ENCODE measurements at regions of chr5 and their contacts with region 1.

Region 1: GRCh38 chr5:148746826-148747535 is 79.4 kb upstream of the ADRB2 start:
- DNase-seq: no peak

Region 2: DNA sequence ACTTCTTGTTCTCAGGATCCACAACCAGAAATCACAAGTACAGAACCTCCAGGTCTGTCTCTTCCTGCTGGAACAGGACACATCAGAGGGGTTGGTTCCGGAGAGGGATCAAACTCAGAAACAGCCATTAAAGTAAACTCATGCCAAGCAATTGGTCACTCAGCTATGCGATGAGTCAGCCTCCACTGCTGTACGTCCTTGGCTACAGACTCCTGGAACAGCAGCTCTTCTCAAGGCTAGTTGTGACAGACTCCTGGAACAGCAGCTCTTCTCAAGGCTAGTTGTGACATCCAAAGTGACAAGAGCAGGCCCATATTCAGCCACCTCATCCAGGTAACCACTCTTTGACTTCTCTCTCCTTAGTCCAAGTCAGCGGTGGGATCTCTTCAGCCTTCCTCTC is 478.4 kb before region 1 on chr5 and contains the start of gene SPINK13:
- intact Hi-C with region 1: no loop called
- DNase-seq: no peak
- total RNA-seq, gene SPINK13: not detected

Region 3: GRCh38 chr5:148523139-148523538 is 223.8 kb before region 1 on chr5:
- intact Hi-C with region 1: no loop called
- DNase-seq: no peak

Region 4: GRCh38 chr5:148799737-148800527 is 53.0 kb after region 1 on chr5:
- intact Hi-C with region 1: loop called (anchors 5 kb)
- DNase-seq: no peak